PC-3 (cell line): ENCODE measurements at regions of chr11 and their contacts with region 1.

Region 1: DNA sequence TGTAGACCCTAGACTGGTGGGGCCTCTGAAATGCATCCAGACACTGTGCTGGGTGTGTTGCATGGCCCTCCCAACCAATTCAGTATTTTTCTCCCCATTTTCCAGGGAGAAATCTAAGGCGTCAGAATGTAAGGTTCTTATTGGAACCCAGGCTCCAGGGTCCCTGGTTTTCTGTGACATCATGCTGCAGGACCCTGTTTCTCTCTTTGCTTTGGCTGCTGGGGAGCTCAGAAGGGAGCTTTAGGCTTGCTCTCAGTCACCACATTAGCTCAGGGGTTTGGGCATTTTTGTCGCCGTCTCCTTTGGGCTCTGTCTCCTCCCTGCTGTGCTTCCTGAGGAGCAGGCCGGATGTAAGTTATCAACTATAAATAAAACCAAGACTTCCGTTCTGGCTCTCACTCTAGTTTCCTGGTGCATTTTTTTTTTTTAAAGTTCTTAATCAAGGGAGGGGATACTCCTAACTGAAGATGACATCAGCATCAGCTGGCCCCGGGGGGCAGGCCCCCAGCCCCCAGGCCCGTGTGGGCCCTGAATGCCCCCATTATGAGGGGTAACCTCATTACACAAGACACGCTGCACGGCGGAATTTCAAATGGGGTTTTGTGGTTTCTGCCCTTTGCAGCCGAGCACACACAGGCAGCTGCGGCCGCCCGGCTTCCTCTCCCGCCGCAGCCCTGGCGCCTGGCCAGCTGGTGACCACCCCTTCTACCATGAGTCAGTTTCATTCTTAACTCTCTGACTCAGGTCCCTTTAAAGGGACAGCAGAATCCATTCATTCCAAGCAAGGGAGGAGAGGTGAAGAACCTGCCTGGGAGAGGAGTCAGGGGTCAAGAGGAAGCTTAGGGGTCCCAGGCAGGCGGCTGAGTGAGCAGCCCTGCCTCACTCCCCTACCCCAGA is 3.2 kb downstream of the MYEOV start:
- DNase-seq: peak; percentile 100
- ATAC-seq: peak; percentile 7
- H3K4me3 ChIP-seq: peak overlapping the region; percentile 76
- H3K27ac ChIP-seq: peak overlapping the region; percentile 98
- H3K4me1 ChIP-seq: peaks cover 71% of the 10 kb centered on the region
- H3K27me3 ChIP-seq: no peaks in the 10 kb centered on the region
- CTCF ChIP-seq: no peak

Region 2: GRCh38 chr11:69101115-69101791 is 195.9 kb before region 1 on chr11:
- CTCF ChIA-PET with region 1: interaction called, 4 read pairs
- POLR2A ChIA-PET with region 1: interaction called, 3 read pairs
- intact Hi-C with region 1: loop called (anchors 5 kb)
- DNase-seq: peak; percentile 95
- ATAC-seq: peak; percentile 84
- H3K4me3 ChIP-seq: no peak overlapping the region
- H3K27ac ChIP-seq: no peak overlapping the region
- H3K4me1 ChIP-seq: peaks cover 17% of the 10 kb centered on the region
- H3K27me3 ChIP-seq: no peaks in the 10 kb centered on the region
- CTCF ChIP-seq: peak; percentile 98

Region 3: DNA sequence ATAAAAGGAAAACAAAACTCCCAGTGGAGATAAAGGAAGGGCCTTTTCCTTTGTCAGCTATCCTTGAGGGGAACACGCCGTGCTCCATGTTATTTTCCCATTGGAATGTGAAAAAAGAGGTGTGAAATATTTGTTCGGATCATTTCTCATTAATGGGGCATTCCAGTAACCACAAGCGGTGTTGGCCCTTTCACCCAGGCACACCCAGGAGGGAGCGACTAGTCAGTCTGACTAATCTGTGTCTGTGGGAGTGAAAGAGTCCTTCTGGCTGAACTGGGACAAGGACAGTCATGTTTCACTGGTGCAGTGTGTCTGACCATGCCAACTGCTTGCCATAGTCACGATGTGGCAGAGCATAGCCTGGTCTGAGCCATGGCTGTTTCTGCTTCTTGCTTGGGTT is 16.1 kb before region 1 on chr11:
- CTCF ChIA-PET with region 1: interaction called, 5 read pairs
- POLR2A ChIA-PET with region 1: interaction called, 3 read pairs
- intact Hi-C with region 1: loop called (anchors 1 kb)
- DNase-seq: peak; percentile 97
- ATAC-seq: peak; percentile 91
- H3K4me3 ChIP-seq: no peak overlapping the region; the same call in 1 of the 2 replicates
- H3K27ac ChIP-seq: peak overlapping the region; percentile 93
- H3K4me1 ChIP-seq: peaks cover 46% of the 10 kb centered on the region
- H3K27me3 ChIP-seq: no peaks in the 10 kb centered on the region
- CTCF ChIP-seq: no peak

Region 4: GRCh38 chr11:69351460-69351859 is 54.3 kb after region 1 on chr11:
- CTCF ChIA-PET with region 1: no interaction called
- POLR2A ChIA-PET with region 1: interaction called, 5 read pairs
- intact Hi-C with region 1: loop called (anchors 2 kb)
- DNase-seq: peak; percentile 62
- ATAC-seq: peak; percentile 21; the same call in 1 of the 2 replicates
- H3K4me3 ChIP-seq: no peak overlapping the region
- H3K27ac ChIP-seq: peak overlapping the region; percentile 74
- H3K4me1 ChIP-seq: peaks cover 42% of the 10 kb centered on the region
- H3K27me3 ChIP-seq: no peaks in the 10 kb centered on the region
- CTCF ChIP-seq: no peak

Region 5: DNA sequence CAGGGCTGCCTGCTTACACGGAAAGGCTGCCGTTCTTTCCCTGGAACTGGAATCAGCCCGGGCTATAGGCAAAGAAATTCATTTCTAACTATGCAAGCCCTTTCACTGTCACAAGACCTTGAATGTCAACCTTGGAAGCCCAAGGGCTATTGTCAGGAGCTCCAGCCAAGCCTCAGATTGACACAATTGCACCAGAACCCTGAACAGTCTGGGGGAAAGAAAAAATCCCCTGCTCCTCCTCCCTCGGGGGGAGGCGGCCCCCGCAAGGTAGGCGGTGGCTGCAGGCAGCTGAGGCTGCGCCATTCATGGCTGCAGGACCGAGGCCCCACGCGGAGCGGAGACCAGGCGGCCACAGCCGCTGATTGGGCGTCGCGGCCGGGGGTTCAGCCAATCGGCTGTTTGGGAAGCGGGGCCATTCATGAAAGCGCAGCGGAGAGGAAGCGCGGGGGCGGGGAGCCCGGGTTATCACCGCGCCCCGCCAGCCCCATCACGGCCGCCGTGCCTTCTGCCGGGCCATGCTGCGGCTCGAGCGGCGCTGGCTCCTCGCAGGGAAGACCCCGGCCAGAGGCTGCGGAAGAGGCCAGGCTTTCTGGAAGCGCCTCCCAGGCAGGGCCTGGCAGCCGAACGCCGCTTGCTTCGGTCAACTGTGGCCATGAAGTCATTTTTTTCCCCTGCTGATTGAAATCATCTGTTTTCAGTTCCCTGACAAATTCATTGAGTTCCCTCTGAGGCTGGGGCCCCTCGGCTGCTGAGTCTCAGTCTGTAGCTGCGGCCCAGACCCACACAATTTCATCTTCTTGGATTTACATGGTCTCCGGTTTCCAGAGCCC is 146.2 kb after region 1 on chr11:
- CTCF ChIA-PET with region 1: no interaction called
- POLR2A ChIA-PET with region 1: no interaction called
- intact Hi-C with region 1: loop called (anchors 2 kb)
- DNase-seq: peak; percentile 96
- ATAC-seq: peak; percentile 87
- H3K4me3 ChIP-seq: peak overlapping the region; percentile 48
- H3K27ac ChIP-seq: peak overlapping the region; percentile 86
- H3K4me1 ChIP-seq: peaks cover 39% of the 10 kb centered on the region
- H3K27me3 ChIP-seq: no peaks in the 10 kb centered on the region
- CTCF ChIP-seq: no peak